Common myeloid progenitor, CD34-positive (primary cell): ENCODE measurements at regions of chr17 and their contacts with region 1.

Region 1: DNA sequence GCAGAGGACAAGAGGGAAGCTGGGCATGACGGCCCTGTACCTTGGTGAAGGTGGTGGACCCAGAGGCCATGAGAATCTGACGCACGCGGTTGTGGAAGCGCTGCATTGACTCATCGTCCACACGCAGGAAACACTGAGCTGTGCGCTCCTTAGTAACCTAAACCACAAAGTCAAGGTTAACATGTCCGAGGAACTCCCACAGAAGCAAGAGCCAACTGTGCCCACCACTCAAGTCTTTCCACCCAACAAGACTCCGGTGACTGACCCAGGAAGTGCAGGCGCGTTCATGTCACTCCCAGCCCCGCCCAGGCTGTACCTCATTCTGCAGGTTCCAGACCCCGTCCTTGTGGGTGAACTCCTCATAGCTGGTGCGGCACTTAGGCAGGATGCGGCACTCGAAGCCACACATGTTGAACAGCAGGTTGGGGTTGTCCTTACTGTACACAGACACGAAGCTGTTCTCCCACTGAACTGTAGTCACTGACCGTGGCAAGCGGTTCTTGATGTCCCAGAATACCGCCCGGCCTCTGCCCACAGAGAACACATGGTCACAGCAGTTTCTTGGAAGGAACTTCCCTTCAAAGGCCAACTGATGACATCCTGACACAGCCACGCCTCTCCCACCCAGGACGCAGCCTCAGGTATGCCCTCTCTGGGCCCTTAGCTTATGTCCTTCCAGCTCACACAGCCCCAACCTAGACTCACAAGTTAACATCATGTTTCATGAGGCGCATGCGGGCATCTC is 11.5 kb downstream of the PRPF8 start:
- DNase-seq: no peak
- H3K4me3 ChIP-seq: no peak overlapping the region
- H3K27ac ChIP-seq: no peak overlapping the region
- H3K4me1 ChIP-seq: no peaks in the 10 kb centered on the region
- H3K27me3 ChIP-seq: no peaks in the 10 kb centered on the region

Region 2: DNA sequence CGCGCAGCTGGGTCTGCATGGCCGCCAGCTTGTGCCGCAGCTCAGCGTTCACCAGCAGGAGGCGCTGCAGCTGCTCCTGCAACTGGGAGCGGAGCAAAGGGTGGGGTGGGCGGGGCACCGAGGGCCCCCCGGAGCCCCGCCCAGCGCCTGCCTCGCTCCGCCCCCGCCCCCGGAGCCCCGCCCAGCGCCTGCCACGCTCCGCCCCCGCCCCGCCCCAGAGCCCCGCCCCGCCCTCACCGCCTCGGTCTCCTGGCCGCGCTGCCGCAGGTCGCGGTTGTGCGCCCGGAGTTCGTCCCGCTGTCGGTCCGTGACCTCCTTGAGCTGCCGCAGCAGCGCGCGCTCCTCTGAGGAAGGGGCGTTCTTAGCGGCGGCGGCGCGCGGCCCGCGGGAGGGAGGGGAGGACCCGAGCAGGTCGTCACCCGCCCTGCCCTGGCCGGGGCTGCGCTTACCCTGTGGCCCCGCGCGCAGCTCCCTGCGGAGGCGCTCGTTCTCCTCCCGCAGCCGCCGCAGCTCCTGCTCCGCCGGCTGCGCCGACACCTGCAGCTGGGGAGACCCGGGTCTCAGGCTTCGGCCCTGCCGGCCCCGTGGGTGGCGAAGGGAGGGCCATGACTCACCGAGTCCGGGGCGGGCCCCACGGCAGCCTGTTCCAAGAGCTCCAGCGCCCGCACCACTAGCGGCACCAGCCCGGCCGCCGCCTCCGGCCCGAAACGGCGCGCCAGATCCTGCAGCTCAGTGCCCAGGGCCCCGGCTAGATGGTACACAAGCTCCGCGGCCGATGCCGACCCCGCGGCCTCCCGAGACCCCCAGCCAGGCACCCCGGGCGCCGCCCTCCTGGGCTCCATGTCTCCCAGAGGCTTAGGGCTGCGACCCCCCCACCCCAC is 24.0 kb before region 1 on chr17:
- CTCF ChIA-PET with region 1: interaction called, 10 read pairs
- POLR2A ChIA-PET with region 1: no interaction called
- DNase-seq: peak; percentile 96 to 98 (median 96)
- H3K4me3 ChIP-seq: peak overlapping the region; percentile 56 to 83 (median 68)
- H3K27ac ChIP-seq: peak overlapping the region; percentile 50 to 73
- H3K4me1 ChIP-seq: peaks cover 0 to 59% (median 56%) of the 10 kb centered on the region in 4 experiments
- H3K27me3 ChIP-seq: no peaks in the 10 kb centered on the region

Region 3: GRCh38 chr17:1658100-1658499 is 15.1 kb before region 1 on chr17:
- CTCF ChIA-PET with region 1: interaction called, 15 read pairs
- POLR2A ChIA-PET with region 1: no interaction called
- DNase-seq: no peak
- H3K4me3 ChIP-seq: no peak overlapping the region
- H3K27ac ChIP-seq: no peak overlapping the region
- H3K4me1 ChIP-seq: no peaks in the 10 kb centered on the region
- H3K27me3 ChIP-seq: no peaks in the 10 kb centered on the region

Region 4: GRCh38 chr17:1684378-1685189 is 11.4 kb after region 1 on chr17 and contains the start of gene PRPF8:
- CTCF ChIA-PET with region 1: interaction called, 38 read pairs
- POLR2A ChIA-PET with region 1: interaction called, 3 read pairs
- DNase-seq: peak; percentile 97 to 99 (median 98)
- H3K4me3 ChIP-seq: peak within 1 kb of the TSS; percentile 79 to 94 (median 91)
- H3K27ac ChIP-seq: peak within 1 kb of the TSS; percentile 80 to 94
- H3K4me1 ChIP-seq: peaks cover 0 to 13% (median 10%) of the 10 kb centered on the region in 4 experiments
- H3K27me3 ChIP-seq: no peaks in the 10 kb centered on the region

Region 5: GRCh38 chr17:1716076-1716995 is 43.1 kb after region 1 on chr17:
- CTCF ChIA-PET with region 1: interaction called, 12 read pairs
- POLR2A ChIA-PET with region 1: interaction called, 3 read pairs
- DNase-seq: peak; percentile 100
- H3K4me3 ChIP-seq: peak overlapping the region; percentile 72 to 95 (median 80)
- H3K27ac ChIP-seq: peak overlapping the region; percentile 98 to 99
- H3K4me1 ChIP-seq: peaks cover 0 to 53% (median 45%) of the 10 kb centered on the region in 4 experiments
- H3K27me3 ChIP-seq: no peaks in the 10 kb centered on the region

Region 6: GRCh38 chr17:1865252-1866037 is 192.2 kb after region 1 on chr17:
- CTCF ChIA-PET with region 1: interaction called, 12 read pairs
- POLR2A ChIA-PET with region 1: no interaction called
- DNase-seq: peak; percentile 51 to 76 (median 65)
- H3K4me3 ChIP-seq: no peak overlapping the region
- H3K27ac ChIP-seq: no peak overlapping the region
- H3K4me1 ChIP-seq: peaks cover 0 to 2% (median under 1%) of the 10 kb centered on the region in 4 experiments
- H3K27me3 ChIP-seq: no peaks in the 10 kb centered on the region